Naive thymus-derived CD4-positive, alpha-beta T cell (primary cell): ENCODE measurements at regions of chr12 and their contacts with region 1.

Region 1: DNA sequence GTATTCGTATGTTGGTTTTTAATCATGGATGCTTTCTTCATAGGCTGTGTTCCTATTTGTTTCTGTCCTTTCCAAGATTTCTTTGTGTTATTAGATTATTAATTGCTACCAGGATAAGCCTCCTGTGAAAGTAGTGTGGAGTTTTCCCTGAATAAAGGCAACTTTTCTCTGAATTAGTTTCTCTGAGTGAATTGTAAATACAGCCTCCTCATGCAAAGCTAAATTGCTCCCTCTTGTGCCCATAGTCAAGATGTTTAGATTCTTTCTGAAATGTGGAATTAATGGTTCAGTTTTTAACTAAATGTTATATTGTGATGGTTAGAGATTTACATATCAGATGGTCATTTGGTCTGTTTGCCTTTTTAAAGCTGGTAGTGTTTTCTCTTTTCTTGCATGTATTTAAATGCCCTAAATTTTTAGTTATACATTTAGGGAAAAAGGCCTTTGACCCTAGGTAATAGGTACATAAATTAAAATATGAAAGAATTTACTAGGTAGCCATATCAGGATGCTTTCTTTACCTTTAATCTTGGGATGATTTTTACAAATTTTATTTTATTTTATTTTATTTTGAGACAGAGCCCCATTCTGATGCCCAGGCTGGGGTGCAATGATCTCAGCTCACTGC is 8.9 kb downstream of the APAF1 start:
- DNase-seq: peak in 7 of 9 donors; percentile 32 to 69 (median 51)
- ATAC-seq: peak; percentile 64
- H3K4me3 ChIP-seq: no peak overlapping the region
- H3K4me3 Mint-ChIP-seq: no peak overlapping the region
- H3K27ac ChIP-seq: no peak overlapping the region
- H3K27ac Mint-ChIP-seq: peak overlapping the region in 1 of 9 donors; percentile 70
- H3K4me1 ChIP-seq: no peaks in the 10 kb centered on the region
- H3K4me1 Mint-ChIP-seq: peaks cover 4 to 18% (median 12%) of the 10 kb centered on the region in 7 donors
- H3K27me3 ChIP-seq: no peaks in the 10 kb centered on the region
- H3K27me3 Mint-ChIP-seq: no peaks in the 10 kb centered on the region

Region 2: GRCh38 chr12:98424726-98425401 is 229.1 kb before region 1 on chr12:
- CTCF ChIA-PET with region 1: interaction called, 3 read pairs
- POLR2A ChIA-PET with region 1: no interaction called
- intact Hi-C with region 1: loop called (anchors 1 kb)
- DNase-seq: peak; percentile 13 to 52 (median 44)
- ATAC-seq: peak; percentile 83
- H3K4me3 ChIP-seq: no peak overlapping the region
- H3K4me3 Mint-ChIP-seq: no peak overlapping the region
- H3K27ac ChIP-seq: no peak overlapping the region
- H3K27ac Mint-ChIP-seq: no peak overlapping the region
- H3K4me1 ChIP-seq: no peaks in the 10 kb centered on the region
- H3K4me1 Mint-ChIP-seq: peaks cover 0 to 6% (median 5%) of the 10 kb centered on the region in 7 donors
- H3K27me3 ChIP-seq: no peaks in the 10 kb centered on the region
- H3K27me3 Mint-ChIP-seq: peaks cover 0 to 9% (median 0%) of the 10 kb centered on the region in 5 donors

Region 3: DNA sequence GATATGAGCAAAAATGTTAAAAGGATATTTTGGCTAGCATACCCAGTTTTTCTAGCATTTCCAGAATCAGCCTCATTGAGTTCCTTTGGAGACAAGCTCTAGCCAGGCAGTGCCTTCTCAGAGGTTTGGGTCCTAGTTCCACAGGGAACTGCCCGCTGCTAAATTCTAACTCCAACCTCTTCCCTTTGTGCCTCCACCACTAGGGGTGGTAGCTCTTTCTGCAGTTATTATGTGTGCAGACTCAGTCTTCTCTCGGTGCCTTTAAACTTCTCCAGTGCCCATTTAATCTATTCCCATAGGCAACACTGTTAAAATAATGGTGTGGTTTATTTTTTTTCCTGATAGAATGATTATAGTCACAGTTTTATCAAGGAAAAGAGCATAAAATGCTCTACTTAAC is 82.0 kb before region 1 on chr12:
- CTCF ChIA-PET with region 1: interaction called, 59 read pairs
- POLR2A ChIA-PET with region 1: interaction called, 3 read pairs
- intact Hi-C with region 1: loop called (anchors 1 kb)
- DNase-seq: no peak
- ATAC-seq: no peak
- H3K4me3 ChIP-seq: no peak overlapping the region
- H3K4me3 Mint-ChIP-seq: no peak overlapping the region
- H3K27ac ChIP-seq: no peak overlapping the region
- H3K27ac Mint-ChIP-seq: no peak overlapping the region
- H3K4me1 ChIP-seq: no peaks in the 10 kb centered on the region
- H3K4me1 Mint-ChIP-seq: peaks cover 0 to 1% (median under 1%) of the 10 kb centered on the region in 7 donors
- H3K27me3 ChIP-seq: no peaks in the 10 kb centered on the region
- H3K27me3 Mint-ChIP-seq: peaks cover 0 to 3% (median 0%) of the 10 kb centered on the region in 5 donors

Region 4: GRCh38 chr12:98606357-98606988 is 47.5 kb before region 1 on chr12:
- CTCF ChIA-PET with region 1: interaction called, 3 read pairs
- POLR2A ChIA-PET with region 1: interaction called, 3 read pairs
- intact Hi-C with region 1: loop called in 1 of 2 experiments (anchors 1 kb)
- DNase-seq: no peak
- ATAC-seq: no peak
- H3K4me3 ChIP-seq: no peak overlapping the region
- H3K4me3 Mint-ChIP-seq: peak overlapping the region in 6 of 10 donors; percentile 16 to 83 (median 72)
- H3K27ac ChIP-seq: no peak overlapping the region
- H3K27ac Mint-ChIP-seq: peak overlapping the region in 3 of 9 donors; percentile 66 to 70 (median 67)
- H3K4me1 ChIP-seq: no peaks in the 10 kb centered on the region
- H3K4me1 Mint-ChIP-seq: peaks cover 0 to 15% (median 8%) of the 10 kb centered on the region in 7 donors
- H3K27me3 ChIP-seq: no peaks in the 10 kb centered on the region
- H3K27me3 Mint-ChIP-seq: no peaks in the 10 kb centered on the region

Region 5: GRCh38 chr12:99332936-99333591 is 679.1 kb after region 1 on chr12:
- CTCF ChIA-PET with region 1: no interaction called
- POLR2A ChIA-PET with region 1: no interaction called
- intact Hi-C with region 1: no loop called
- DNase-seq: no peak
- ATAC-seq: no peak
- H3K4me3 ChIP-seq: no peak overlapping the region
- H3K4me3 Mint-ChIP-seq: no peak overlapping the region
- H3K27ac ChIP-seq: no peak overlapping the region
- H3K27ac Mint-ChIP-seq: no peak overlapping the region
- H3K4me1 ChIP-seq: no peaks in the 10 kb centered on the region
- H3K4me1 Mint-ChIP-seq: no peaks in the 10 kb centered on the region
- H3K27me3 ChIP-seq: no peaks in the 10 kb centered on the region
- H3K27me3 Mint-ChIP-seq: no peaks in the 10 kb centered on the region